Body of pancreas (tissue), 4 donors: ENCODE measurements at regions of chr20 and their contacts with region 1.

Region 1: DNA sequence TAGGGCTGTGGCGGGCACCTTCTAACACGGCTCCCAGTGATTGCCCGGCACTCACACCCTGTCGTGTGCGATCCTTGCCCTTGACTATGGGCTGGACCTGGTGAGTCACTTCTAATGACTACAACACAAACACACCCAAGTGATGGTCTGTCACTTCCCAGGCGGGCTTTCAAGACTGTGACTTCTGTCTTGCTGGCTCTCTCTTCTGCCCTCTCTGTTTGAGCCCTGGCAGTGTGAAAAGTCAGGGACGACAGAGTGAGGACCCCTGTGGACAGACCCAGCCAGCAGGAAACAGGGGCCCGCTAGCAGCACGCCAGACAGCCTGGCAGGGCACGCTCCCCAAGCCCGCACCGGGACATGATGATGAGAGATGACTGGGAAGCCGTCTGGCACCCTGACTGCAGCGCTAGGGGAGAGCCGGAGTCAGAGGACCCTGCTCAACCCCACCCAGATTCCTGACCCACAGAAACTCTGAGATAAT is 43.0 kb downstream of the KIF16B start:
- DNase-seq: peak in 1 of 4 donors; percentile 55
- ATAC-seq: no peak
- H3K4me3 ChIP-seq: no peak overlapping the region
- H3K27ac ChIP-seq: no peak overlapping the region
- H3K4me1 ChIP-seq: peaks cover 11% of the 10 kb centered on the region
- H3K27me3 ChIP-seq: no peaks in the 10 kb centered on the region
- CTCF ChIP-seq: no peak
- POLR2A ChIP-seq: no peak

Region 2: DNA sequence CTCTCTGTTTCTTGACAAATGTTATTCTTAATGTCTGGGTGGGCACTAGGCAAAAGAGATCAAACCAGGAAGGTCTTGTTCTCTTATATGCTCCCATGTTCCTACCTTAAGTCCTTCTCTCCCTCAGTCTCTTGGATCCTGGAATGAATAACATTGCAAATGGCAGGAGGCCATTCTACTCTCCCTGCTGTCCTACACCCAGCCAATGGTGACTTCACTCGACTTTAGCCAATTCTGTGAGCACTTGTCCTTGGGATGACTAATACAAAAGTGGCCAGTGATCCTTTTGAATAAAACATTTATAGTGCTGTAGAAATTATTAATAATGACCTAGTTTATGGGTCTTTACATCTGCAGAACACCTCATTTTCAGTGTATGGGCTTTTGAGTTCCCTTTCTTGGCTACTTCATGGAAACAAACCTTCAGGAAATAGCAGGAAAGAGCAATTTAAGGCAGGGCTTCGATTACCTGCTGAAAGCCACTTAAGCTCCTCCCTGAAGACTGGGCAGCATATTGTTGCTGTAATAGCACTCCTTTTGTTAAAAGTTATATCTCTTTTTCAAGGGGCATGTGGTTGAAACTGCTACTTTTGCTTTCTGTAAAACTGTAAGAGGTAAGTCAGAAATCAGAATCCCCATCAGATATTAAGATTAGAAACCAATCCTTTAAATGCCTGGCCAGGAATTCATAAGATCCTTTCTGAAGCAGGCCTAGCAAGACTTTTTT is 228.4 kb after region 1 on chr20:
- intact Hi-C with region 1: loop called (anchors 10 kb)
- DNase-seq: no peak
- ATAC-seq: no peak
- H3K4me3 ChIP-seq: no peak overlapping the region
- H3K27ac ChIP-seq: no peak overlapping the region
- H3K4me1 ChIP-seq: peaks cover 10% of the 10 kb centered on the region
- H3K27me3 ChIP-seq: no peaks in the 10 kb centered on the region
- CTCF ChIP-seq: no peak
- POLR2A ChIP-seq: no peak

Region 3: GRCh38 chr20:17471606-17472187 is 941.5 kb after region 1 on chr20:
- intact Hi-C with region 1: no loop called
- DNase-seq: no peak
- ATAC-seq: no peak
- H3K4me3 ChIP-seq: no peak overlapping the region
- H3K27ac ChIP-seq: no peak overlapping the region
- H3K4me1 ChIP-seq: no peaks in the 10 kb centered on the region
- H3K27me3 ChIP-seq: no peaks in the 10 kb centered on the region
- CTCF ChIP-seq: no peak
- POLR2A ChIP-seq: no peak